ENCODE measurements at regions of chr17 and their contacts with region 1.

Region 1: DNA sequence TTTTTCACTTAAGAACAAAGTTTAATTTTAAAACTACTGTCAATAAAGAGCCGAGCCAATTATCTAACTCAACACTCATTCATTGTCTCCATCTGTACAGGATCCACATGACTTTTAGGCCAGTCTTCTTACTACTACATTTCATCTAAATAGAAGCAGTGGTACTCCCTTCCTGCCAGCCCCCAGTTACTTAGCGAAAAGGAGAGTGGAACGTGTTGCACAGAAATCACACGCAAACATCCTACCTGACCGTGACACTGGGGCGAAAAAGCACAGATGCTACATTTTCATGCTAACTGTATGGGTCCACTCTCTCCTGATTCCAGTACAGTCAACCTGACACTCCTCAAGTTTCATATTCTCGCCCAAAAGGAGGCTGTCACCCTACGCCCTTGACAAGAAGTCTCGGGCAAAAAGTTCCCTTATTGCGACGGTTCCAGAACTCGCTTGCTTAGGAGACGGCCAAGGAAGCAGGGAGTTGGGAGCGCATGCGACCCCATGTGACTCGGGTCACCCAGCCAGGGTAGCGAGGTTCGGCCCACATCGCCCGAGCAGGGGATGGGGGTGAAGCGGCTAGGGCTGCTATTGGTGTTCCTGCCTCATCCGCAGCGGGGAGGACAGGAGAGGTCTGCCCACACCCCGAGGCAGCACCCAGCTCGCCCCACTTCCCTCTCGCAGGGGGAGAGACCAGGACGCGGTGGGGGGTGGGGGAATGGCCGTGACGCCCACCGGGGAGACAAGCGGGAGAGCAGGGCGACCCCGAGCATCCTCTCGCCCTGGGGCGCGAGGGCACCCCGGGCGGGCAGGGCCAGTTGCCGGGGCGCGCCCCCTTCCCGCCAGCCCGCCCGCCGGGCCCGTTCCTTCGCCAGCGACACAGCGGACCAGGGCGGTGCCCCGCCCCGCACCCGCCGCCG is 935 bp downstream of the GNA13 start:
- DNase-seq: peak; percentile 18 to 77 (median 58)
- ATAC-seq: peak; percentile 30
- H3K4me3 ChIP-seq: peak overlapping the region; percentile 87 to 93
- H3K4me3 Mint-ChIP-seq: peak overlapping the region; percentile 98
- H3K27ac ChIP-seq: peak overlapping the region; percentile 95 to 99
- H3K27ac Mint-ChIP-seq: peak overlapping the region; percentile 94
- H3K4me1 ChIP-seq: peaks cover 14% of the 10 kb centered on the region
- H3K4me1 Mint-ChIP-seq: peaks cover 51% of the 10 kb centered on the region
- H3K27me3 ChIP-seq: no peaks in the 10 kb centered on the region
- H3K27me3 Mint-ChIP-seq: no peaks in the 10 kb centered on the region
- CTCF ChIP-seq: no peak

Region 2: DNA sequence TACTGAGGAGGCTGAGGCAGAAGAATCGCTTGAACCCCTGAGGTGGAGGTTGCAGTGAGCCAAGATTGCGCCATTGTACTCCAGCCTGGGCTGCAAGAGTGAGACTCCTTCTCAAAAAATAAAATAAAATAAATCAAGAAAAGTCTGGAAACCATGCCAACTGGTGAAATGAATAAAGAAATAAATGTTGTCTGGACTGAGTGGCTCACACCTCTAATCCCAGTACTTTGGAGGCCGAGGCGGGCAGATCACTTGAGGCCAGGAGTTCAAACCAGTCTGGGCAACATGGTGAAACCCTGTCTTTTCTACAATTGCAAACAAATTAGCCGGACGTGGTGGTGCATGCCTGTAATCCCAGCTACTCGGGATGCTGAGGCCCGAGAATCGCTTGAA is 135.6 kb before region 1 on chr17:
- CTCF ChIA-PET with region 1: no interaction called
- POLR2A ChIA-PET with region 1: interaction called, 5 read pairs
- intact Hi-C with region 1: loop called in 1 of 2 experiments (anchors 5 kb)
- DNase-seq: peak in 3 of 9 experiments; percentile 23 to 47 (median 25)
- ATAC-seq: no peak
- H3K4me3 ChIP-seq: peak overlapping the region; percentile 59 to 73
- H3K4me3 Mint-ChIP-seq: peak overlapping the region; percentile 88
- H3K27ac ChIP-seq: peak overlapping the region; percentile 63 to 72
- H3K27ac Mint-ChIP-seq: peak overlapping the region; percentile 92
- H3K4me1 ChIP-seq: peaks cover 4% of the 10 kb centered on the region
- H3K4me1 Mint-ChIP-seq: peaks cover 3% of the 10 kb centered on the region
- H3K27me3 ChIP-seq: no peaks in the 10 kb centered on the region
- H3K27me3 Mint-ChIP-seq: no peaks in the 10 kb centered on the region
- CTCF ChIP-seq: no peak

Region 3: GRCh38 chr17:64975329-64976087 is 80.1 kb before region 1 on chr17:
- CTCF ChIA-PET with region 1: interaction called, 4 read pairs
- POLR2A ChIA-PET with region 1: interaction called, 20 read pairs
- intact Hi-C with region 1: loop called (anchors 1 kb)
- DNase-seq: peak; percentile 94 to 100 (median 97)
- ATAC-seq: peak; percentile 76
- H3K4me3 ChIP-seq: peak overlapping the region; percentile 68 to 71
- H3K4me3 Mint-ChIP-seq: peak overlapping the region; percentile 97
- H3K27ac ChIP-seq: peak overlapping the region; percentile 93 to 97
- H3K27ac Mint-ChIP-seq: peak overlapping the region; percentile 100
- H3K4me1 ChIP-seq: peaks cover 16% of the 10 kb centered on the region
- H3K4me1 Mint-ChIP-seq: peaks cover 37% of the 10 kb centered on the region
- H3K27me3 ChIP-seq: no peaks in the 10 kb centered on the region
- H3K27me3 Mint-ChIP-seq: no peaks in the 10 kb centered on the region
- CTCF ChIP-seq: no peak

Region 4: GRCh38 chr17:65013613-65014391 is 41.8 kb before region 1 on chr17:
- CTCF ChIA-PET with region 1: no interaction called
- POLR2A ChIA-PET with region 1: interaction called, 3 read pairs
- intact Hi-C with region 1: loop called in 1 of 2 experiments (anchors 5 kb)
- DNase-seq: peak in 6 of 9 experiments; percentile 11 to 70 (median 38)
- ATAC-seq: peak; percentile 50
- H3K4me3 ChIP-seq: no peak overlapping the region
- H3K4me3 Mint-ChIP-seq: peak overlapping the region; percentile 5
- H3K27ac ChIP-seq: peak overlapping the region in 1 of 2 experiments; percentile 30
- H3K27ac Mint-ChIP-seq: peak overlapping the region; percentile 30
- H3K4me1 ChIP-seq: peaks cover 18% of the 10 kb centered on the region
- H3K4me1 Mint-ChIP-seq: peaks cover 76% of the 10 kb centered on the region
- H3K27me3 ChIP-seq: no peaks in the 10 kb centered on the region
- H3K27me3 Mint-ChIP-seq: no peaks in the 10 kb centered on the region
- CTCF ChIP-seq: no peak

Region 5: GRCh38 chr17:65039336-65039988 is 16.1 kb before region 1 on chr17:
- CTCF ChIA-PET with region 1: interaction called, 6 read pairs
- POLR2A ChIA-PET with region 1: interaction called, 6 read pairs
- intact Hi-C with region 1: loop called (anchors 1 kb)
- DNase-seq: peak in 7 of 9 experiments; percentile 41 to 92 (median 61)
- ATAC-seq: peak; percentile 89
- H3K4me3 ChIP-seq: peak overlapping the region; percentile 3 to 10
- H3K4me3 Mint-ChIP-seq: peak overlapping the region; percentile 74
- H3K27ac ChIP-seq: peak overlapping the region; percentile 57 to 85
- H3K27ac Mint-ChIP-seq: peak overlapping the region; percentile 96
- H3K4me1 ChIP-seq: peaks cover 86% of the 10 kb centered on the region
- H3K4me1 Mint-ChIP-seq: peaks cover 85% of the 10 kb centered on the region
- H3K27me3 ChIP-seq: no peaks in the 10 kb centered on the region
- H3K27me3 Mint-ChIP-seq: no peaks in the 10 kb centered on the region
- CTCF ChIP-seq: no peak

Region 6: GRCh38 chr17:65122836-65123756 is 67.5 kb after region 1 on chr17:
- CTCF ChIA-PET with region 1: no interaction called
- POLR2A ChIA-PET with region 1: no interaction called
- intact Hi-C with region 1: loop called in 1 of 2 experiments (anchors 2 kb)
- DNase-seq: peak; percentile 70 to 94 (median 81)
- ATAC-seq: peak; percentile 96
- H3K4me3 ChIP-seq: peak overlapping the region; percentile 40 to 70
- H3K4me3 Mint-ChIP-seq: peak overlapping the region; percentile 87
- H3K27ac ChIP-seq: peak overlapping the region; percentile 46 to 82
- H3K27ac Mint-ChIP-seq: peak overlapping the region; percentile 98
- H3K4me1 ChIP-seq: peaks cover 6% of the 10 kb centered on the region
- H3K4me1 Mint-ChIP-seq: peaks cover 14% of the 10 kb centered on the region
- H3K27me3 ChIP-seq: no peaks in the 10 kb centered on the region
- H3K27me3 Mint-ChIP-seq: peaks cover 5% of the 10 kb centered on the region
- CTCF ChIP-seq: no peak

Region 7: GRCh38 chr17:65198653-65199382 is 143.2 kb after region 1 on chr17:
- CTCF ChIA-PET with region 1: interaction called, 3 read pairs
- POLR2A ChIA-PET with region 1: no interaction called
- intact Hi-C with region 1: loop called in 1 of 2 experiments (anchors 5 kb)
- DNase-seq: peak in 5 of 9 experiments; percentile 6 to 76 (median 52)
- ATAC-seq: peak; percentile 56
- H3K4me3 ChIP-seq: no peak overlapping the region
- H3K4me3 Mint-ChIP-seq: no peak overlapping the region
- H3K27ac ChIP-seq: no peak overlapping the region
- H3K27ac Mint-ChIP-seq: no peak overlapping the region
- H3K4me1 ChIP-seq: peaks cover 3% of the 10 kb centered on the region
- H3K4me1 Mint-ChIP-seq: peaks cover 5% of the 10 kb centered on the region
- H3K27me3 ChIP-seq: no peaks in the 10 kb centered on the region
- H3K27me3 Mint-ChIP-seq: no peaks in the 10 kb centered on the region
- CTCF ChIP-seq: peak; percentile 92

Measured in CD8-positive, alpha-beta T cell (primary cell).